ENCODE measurements at regions of chr12 and their contacts with region 1.

Region 1: GRCh38 chr12:123282111-123282510 is 10.5 kb upstream of the CDK2AP1 start:
- DNase-seq: no peak
- ATAC-seq: no peak
- H3K4me3 Mint-ChIP-seq: no peak overlapping the region
- H3K27ac Mint-ChIP-seq: peak overlapping the region; percentile 24; the same call in 1 of the 2 replicates
- H3K4me1 Mint-ChIP-seq: peaks cover 6% of the 10 kb centered on the region
- H3K27me3 Mint-ChIP-seq: no peaks in the 10 kb centered on the region
- CTCF ChIP-seq: no peak

Region 2: DNA sequence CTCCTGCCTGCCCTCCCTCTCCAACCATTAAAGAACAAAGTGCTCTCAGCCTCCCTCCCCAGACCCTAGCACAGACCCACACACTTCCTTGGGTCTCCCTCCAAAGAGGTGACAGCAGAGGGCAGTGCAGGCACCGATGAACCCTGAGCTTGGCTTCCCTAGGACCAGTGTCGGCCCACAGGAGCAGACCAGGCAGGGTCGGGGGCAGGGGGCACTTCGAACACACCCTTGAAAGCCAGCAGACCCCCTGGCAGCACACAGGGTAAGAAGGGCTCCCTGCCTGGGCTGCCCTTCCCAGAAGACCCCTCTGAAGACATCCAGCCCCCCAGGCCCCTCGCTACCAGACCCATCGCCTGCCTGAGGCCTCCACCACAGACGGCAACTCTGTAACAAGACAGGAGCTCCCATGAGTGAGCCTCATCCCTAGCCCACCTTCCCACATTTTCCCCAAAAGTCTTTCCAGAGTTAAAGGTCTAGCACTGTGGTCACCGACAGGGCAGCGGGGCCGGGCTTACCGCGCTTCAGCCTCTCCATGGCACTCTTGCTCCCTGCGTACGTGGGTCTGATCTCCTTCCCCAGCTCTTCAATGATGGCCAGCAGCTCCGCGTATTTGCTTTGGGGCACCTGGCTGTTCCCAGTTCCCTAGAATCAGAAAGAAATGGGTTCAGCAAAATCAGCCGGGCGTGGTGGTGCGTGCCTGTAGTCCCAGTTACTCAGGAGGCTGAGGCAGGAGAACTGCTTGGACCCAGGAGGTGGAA is 17.3 kb before region 1 on chr12:
- CTCF ChIA-PET with region 1: interaction called, 11 read pairs
- POLR2A ChIA-PET with region 1: no interaction called
- DNase-seq: peak; percentile 62
- ATAC-seq: peak; percentile 71
- H3K4me3 Mint-ChIP-seq: no peak overlapping the region
- H3K27ac Mint-ChIP-seq: peak overlapping the region; percentile 73
- H3K4me1 Mint-ChIP-seq: peaks cover 34% of the 10 kb centered on the region
- H3K27me3 Mint-ChIP-seq: no peaks in the 10 kb centered on the region
- CTCF ChIP-seq: no peak

Measured in WTC11 (cell line).